ENCODE measurements at regions of chr22 and their contacts with region 1.

Region 1: DNA sequence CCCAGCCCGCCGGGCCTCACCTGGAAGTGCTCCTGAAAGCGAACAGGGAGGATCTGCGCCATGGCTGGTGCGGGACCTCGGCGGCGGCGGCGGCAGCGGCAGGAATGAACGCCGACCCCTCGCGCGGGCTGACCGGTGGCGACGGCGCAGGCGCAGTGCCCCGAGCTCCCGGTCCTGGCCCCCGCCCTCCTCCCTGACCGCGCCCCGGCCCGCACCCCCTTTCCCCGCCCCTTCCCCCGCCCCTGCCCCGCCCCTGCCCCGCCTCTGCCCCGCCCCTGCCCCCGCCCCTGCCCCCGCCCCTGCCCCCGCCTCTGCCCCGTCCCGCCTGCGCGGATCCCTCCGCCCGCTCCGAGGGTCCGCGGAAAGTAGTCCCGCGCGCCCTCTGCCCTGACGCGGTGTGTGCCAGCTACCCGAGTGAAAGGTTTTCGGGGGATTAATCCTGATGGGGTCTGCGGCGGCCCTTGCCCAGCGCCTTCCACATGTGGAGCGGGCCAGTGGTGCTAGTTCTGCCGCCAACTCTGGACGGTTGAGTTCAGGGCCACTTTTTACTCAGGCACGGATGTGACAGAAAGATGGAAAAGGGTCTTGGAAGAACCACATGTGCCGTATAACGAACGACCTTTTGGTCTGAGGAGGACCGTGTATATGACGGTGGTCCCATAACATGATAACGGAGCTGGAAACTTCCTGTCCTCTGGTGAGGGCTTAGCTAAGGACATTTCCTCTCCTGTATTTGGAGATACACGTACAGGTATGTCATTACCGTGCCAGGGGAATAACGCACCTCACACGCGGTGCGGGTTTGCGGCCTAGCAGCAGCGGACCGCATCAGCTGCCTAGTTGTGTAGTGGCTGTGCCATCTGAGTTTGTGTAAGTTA is at the start of gene CLTCL1:
- DNase-seq: peak; percentile 75 to 88 (median 86)
- H3K4me3 ChIP-seq: peak within 1 kb of the TSS in 3 of 4 donors; percentile 43 to 100 (median 79)
- H3K27ac ChIP-seq: peak within 1 kb of the TSS; percentile 47 to 93 (median 78)
- H3K4me1 ChIP-seq: peaks cover 20 to 42% of the 10 kb centered on the region in 2 donors
- H3K27me3 ChIP-seq: no peaks in the 10 kb centered on the region
- CTCF ChIP-seq: no peak
- POLR2A ChIP-seq: peak; percentile 39 to 76
- total RNA-seq, gene CLTCL1: 13.0 to 62.8 (median 15.4) TPM

Region 2: GRCh38 chr22:19179497-19180225 is 112.2 kb before region 1 on chr22:
- intact Hi-C with region 1: loop called in 1 of 2 experiments (anchors 10 kb)
- DNase-seq: peak; percentile 73 to 92 (median 86)
- H3K4me3 ChIP-seq: peak overlapping the region in 2 of 4 donors; percentile 79 to 94
- H3K27ac ChIP-seq: peak overlapping the region; percentile 52 to 97 (median 85)
- H3K4me1 ChIP-seq: peaks cover 17 to 25% of the 10 kb centered on the region in 2 donors
- H3K27me3 ChIP-seq: no peaks in the 10 kb centered on the region
- CTCF ChIP-seq: peak; percentile 58 to 82 (median 76)
- POLR2A ChIP-seq: no peak

Region 3: DNA sequence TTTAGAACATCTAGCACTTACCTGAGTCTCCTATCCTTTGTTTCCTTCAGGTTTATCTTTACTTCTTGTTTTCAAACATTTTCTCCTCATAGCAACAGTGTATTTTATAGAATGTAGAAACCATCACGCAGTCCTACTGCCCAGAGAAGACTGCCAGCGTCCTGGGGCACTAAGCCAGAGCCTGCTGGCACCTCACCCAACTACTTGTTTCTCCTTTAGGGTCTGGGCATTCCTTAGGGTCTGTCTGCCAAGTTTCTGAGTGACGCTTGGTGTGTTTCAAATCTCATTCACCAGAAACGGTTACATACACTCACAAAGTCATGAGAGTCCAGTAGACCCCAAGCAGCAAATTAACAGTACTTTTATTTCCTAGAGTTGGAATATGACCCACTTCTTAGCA is 63.6 kb before region 1 on chr22:
- intact Hi-C with region 1: loop called in 1 of 2 experiments (anchors 10 kb)
- DNase-seq: no peak
- H3K4me3 ChIP-seq: no peak overlapping the region
- H3K27ac ChIP-seq: no peak overlapping the region
- H3K4me1 ChIP-seq: no peaks in the 10 kb centered on the region
- H3K27me3 ChIP-seq: no peaks in the 10 kb centered on the region
- CTCF ChIP-seq: no peak
- POLR2A ChIP-seq: no peak

Region 4: DNA sequence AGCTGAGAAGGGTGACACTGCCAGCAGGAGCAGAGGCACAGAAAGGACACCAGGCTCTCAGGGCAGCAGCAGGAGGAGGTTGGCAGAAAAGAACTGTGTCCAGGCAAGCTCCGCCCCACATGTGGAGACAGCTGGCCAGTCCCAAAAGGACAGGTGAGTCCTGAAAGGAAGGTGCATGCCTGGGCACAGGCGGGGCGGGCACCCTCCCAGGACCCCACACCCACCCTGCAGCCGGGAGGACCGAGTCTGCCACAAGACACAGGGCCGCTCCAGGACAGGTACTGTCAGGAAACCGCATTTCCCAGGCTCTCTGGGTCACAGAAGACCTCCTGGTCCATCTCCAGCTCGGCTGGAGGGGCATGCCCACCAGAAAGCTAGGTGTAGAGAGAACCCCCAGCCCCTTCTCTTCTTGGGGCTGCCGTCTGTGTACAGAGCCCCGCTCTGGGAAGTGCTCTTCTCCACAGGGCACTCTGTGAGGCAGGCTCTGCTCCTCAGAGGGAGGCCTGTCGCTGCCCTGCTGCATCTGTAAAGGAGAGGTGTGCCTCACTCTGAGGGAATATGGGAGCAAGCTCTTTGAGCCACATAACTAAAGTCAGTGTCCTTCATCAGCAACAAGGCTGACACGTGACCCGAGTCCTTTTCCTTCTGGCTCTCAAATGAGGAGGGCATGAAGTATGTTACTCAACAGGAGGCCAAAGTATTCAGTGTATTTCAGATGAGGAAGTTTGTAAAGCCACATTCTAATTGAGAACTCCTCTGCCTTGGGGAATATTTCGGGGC is 50.8 kb before region 1 on chr22:
- intact Hi-C with region 1: loop called in 1 of 2 experiments (anchors 10 kb)
- DNase-seq: peak in 1 of 7 donors; percentile 37
- H3K4me3 ChIP-seq: no peak overlapping the region
- H3K27ac ChIP-seq: no peak overlapping the region
- H3K4me1 ChIP-seq: no peaks in the 10 kb centered on the region
- H3K27me3 ChIP-seq: no peaks in the 10 kb centered on the region
- CTCF ChIP-seq: no peak
- POLR2A ChIP-seq: no peak

Region 5: DNA sequence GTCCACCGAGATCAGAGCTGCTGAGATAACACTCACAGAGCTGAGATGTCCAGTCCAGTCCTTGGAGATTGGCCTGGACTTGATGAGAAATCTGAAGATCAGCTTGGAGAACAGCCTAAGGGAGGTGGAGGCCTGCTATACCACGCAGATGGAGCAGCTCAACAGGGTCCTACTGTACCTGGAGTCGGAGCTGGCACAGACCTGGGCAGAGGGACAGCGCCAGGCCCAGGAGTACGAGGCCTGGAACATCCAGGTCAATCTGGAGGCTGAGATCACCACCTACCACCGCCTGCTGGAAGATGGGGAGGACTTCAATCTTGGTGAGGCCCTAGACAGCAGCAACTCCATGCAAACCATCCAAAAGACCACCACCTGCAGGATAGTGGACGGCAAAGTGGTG is 33.4 kb before region 1 on chr22:
- intact Hi-C with region 1: no loop called
- DNase-seq: no peak
- H3K4me3 ChIP-seq: no peak overlapping the region
- H3K27ac ChIP-seq: no peak overlapping the region
- H3K4me1 ChIP-seq: peaks cover 0 to 5% of the 10 kb centered on the region in 2 donors
- H3K27me3 ChIP-seq: no peaks in the 10 kb centered on the region
- CTCF ChIP-seq: no peak
- POLR2A ChIP-seq: no peak

Region 6: GRCh38 chr22:19353363-19354131 is 61.7 kb after region 1 on chr22:
- intact Hi-C with region 1: no loop called
- DNase-seq: no peak
- H3K4me3 ChIP-seq: no peak overlapping the region
- H3K27ac ChIP-seq: no peak overlapping the region
- H3K4me1 ChIP-seq: no peaks in the 10 kb centered on the region
- H3K27me3 ChIP-seq: no peaks in the 10 kb centered on the region
- CTCF ChIP-seq: no peak
- POLR2A ChIP-seq: no peak

Region 7: DNA sequence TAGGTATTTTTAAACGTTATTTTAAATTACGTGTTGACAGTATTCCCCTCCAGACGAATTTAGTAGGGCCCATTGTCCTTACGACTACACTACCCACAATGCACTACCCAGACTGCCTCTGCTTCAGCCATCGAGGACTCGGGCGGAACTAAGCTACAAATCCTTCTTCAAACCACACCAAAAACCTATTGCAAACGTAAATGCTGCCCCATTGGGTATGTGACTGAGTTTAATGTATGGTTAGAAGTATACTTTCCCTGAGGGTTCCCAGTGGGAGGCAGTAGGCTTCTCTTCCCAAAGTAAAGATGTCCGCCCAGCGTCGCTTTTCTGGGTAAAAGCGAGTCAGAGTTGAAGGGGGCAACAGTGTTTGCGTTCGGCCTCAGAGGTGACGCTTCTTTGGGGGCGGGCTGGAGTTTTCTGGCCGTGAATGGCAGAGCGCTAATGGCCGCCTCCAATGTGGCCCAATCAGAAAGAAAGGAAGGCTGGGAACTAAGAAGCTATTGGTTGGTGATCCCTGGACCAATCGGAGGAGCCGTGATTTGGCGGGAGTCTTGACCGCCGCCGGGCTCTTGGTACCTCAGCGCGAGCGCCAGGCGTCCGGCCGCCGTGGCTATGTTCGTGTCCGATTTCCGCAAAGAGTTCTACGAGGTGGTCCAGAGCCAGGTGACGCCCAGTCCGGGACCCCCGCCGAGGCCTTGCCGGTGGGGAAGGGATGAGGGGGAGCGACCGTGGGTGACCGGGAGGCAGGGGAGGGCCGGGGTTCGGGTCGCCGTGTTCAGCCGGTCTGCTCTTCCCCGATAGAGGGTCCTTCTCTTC is 187.7 kb after region 1 on chr22 and contains the start of gene CDC45:
- intact Hi-C with region 1: loop called in 1 of 2 experiments (anchors 10 kb)
- DNase-seq: peak; percentile 95 to 99 (median 97)
- H3K4me3 ChIP-seq: peak within 1 kb of the TSS; percentile 10 to 91 (median 75)
- H3K27ac ChIP-seq: peak within 1 kb of the TSS; percentile 94 to 100 (median 98)
- H3K4me1 ChIP-seq: peaks cover 15 to 21% of the 10 kb centered on the region in 2 donors
- H3K27me3 ChIP-seq: no peaks in the 10 kb centered on the region
- CTCF ChIP-seq: no peak
- POLR2A ChIP-seq: no peak
- total RNA-seq, gene CDC45: 0.87 to 7.7 (median 1.2) TPM in 8 of 9 donors, not detected in the other

Region 8: DNA sequence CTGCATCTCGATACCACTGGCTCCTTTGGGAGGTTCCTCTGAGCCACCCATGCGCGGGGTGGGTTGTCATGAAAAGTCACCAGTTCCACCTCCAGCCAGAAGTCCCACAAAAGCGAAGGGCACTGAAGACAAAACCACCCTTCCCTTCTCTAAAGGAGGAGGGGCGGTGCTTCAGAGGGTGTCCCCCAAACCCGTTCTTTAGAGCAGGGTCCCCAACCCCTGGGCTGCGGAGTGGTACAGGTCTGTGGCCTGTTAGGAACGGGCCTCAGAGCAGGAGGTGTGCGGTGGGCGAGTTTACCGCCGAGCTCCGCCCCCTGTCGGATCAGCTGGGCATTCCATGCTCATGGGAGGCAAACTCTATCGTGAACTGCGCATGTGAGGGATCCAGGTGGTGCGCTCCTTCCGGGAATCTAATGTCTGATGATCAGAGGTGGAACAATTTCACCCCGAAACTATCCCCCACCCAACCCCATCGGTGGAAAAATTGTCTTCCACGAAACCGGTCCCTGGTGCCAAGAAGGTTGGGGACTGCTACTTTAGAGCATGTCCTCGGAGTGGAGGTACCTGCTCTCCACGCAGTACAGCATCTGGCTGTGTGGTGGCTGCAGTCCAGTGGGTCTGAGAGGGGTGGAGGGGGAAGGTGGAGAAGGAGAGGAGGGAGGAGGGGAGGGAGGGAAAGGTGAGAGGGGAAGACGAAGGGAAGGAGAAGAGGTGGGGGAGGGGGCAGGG is 349.6 kb after region 1 on chr22:
- intact Hi-C with region 1: no loop called
- DNase-seq: no peak
- H3K4me3 ChIP-seq: no peak overlapping the region
- H3K27ac ChIP-seq: no peak overlapping the region
- H3K4me1 ChIP-seq: no peaks in the 10 kb centered on the region
- H3K27me3 ChIP-seq: no peaks in the 10 kb centered on the region
- CTCF ChIP-seq: peak in 1 of 6 experiments; percentile 9
- POLR2A ChIP-seq: no peak

Measured in adrenal gland (tissue), 19 donors.